IMR-90 (cell line): ENCODE measurements at regions of chr3 and their contacts with region 1.

Region 1: DNA sequence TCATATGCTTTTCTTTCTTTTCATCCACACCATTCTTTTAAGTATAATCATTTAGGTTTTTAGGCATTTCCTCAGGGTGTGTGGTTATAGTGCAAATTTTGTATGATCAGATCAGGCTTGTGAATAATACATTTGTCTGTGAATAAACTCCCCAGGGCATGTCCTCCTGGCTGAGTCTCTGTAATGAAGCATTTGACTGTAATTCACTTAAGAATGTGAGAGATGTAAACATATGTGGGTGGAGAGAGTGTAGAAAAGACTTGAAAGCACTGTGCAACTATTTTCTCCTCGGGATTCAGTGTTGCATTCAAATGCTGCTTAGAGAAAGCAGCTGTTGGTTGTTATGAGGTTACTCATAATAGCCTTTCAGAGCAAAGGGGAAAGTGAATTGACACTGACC is 996.5 kb downstream of the TUSC7 start:
- DNase-seq: peak; percentile 97
- ATAC-seq: peak; percentile 94
- H3K4me3 ChIP-seq: no peak overlapping the region
- H3K27ac ChIP-seq: peak overlapping the region; percentile 62; the same call in 1 of the 2 replicates
- H3K4me1 ChIP-seq: peaks cover 8% of the 10 kb centered on the region
- H3K27me3 ChIP-seq: no peaks in the 10 kb centered on the region
- CTCF ChIP-seq: no peak
- POLR2A ChIP-seq: no peak
- RAD21 ChIP-seq: no peak

Region 2: GRCh38 chr3:117537949-117538348 is 168.1 kb before region 1 on chr3:
- CTCF ChIA-PET with region 1: no interaction called
- POLR2A ChIA-PET with region 1: no interaction called
- dilution Hi-C with region 1: no loop called
- in situ Hi-C with region 1: no loop called
- intact Hi-C with region 1: loop called (anchors 5 kb)
- DNase-seq: no peak
- ATAC-seq: no peak
- H3K4me3 ChIP-seq: no peak overlapping the region
- H3K27ac ChIP-seq: no peak overlapping the region
- H3K4me1 ChIP-seq: no peaks in the 10 kb centered on the region; the same call in 1 of the 2 replicates
- H3K27me3 ChIP-seq: no peaks in the 10 kb centered on the region
- CTCF ChIP-seq: no peak
- POLR2A ChIP-seq: no peak
- RAD21 ChIP-seq: no peak

Region 3: GRCh38 chr3:117622171-117622841 is 83.7 kb before region 1 on chr3:
- CTCF ChIA-PET with region 1: no interaction called
- POLR2A ChIA-PET with region 1: no interaction called
- dilution Hi-C with region 1: no loop called
- in situ Hi-C with region 1: no loop called
- intact Hi-C with region 1: loop called (anchors 1 kb)
- DNase-seq: peak; percentile 95
- ATAC-seq: peak; percentile 93
- H3K4me3 ChIP-seq: no peak overlapping the region
- H3K27ac ChIP-seq: peak overlapping the region; percentile 58
- H3K4me1 ChIP-seq: peaks cover 4% of the 10 kb centered on the region
- H3K27me3 ChIP-seq: no peaks in the 10 kb centered on the region
- CTCF ChIP-seq: no peak
- POLR2A ChIP-seq: no peak
- RAD21 ChIP-seq: no peak